Activated B cell treated with CpG ODN at 0.5 μM for 24 hours (primary cell): ENCODE measurements at regions of chr16 and their contacts with region 1.

Region 1: DNA sequence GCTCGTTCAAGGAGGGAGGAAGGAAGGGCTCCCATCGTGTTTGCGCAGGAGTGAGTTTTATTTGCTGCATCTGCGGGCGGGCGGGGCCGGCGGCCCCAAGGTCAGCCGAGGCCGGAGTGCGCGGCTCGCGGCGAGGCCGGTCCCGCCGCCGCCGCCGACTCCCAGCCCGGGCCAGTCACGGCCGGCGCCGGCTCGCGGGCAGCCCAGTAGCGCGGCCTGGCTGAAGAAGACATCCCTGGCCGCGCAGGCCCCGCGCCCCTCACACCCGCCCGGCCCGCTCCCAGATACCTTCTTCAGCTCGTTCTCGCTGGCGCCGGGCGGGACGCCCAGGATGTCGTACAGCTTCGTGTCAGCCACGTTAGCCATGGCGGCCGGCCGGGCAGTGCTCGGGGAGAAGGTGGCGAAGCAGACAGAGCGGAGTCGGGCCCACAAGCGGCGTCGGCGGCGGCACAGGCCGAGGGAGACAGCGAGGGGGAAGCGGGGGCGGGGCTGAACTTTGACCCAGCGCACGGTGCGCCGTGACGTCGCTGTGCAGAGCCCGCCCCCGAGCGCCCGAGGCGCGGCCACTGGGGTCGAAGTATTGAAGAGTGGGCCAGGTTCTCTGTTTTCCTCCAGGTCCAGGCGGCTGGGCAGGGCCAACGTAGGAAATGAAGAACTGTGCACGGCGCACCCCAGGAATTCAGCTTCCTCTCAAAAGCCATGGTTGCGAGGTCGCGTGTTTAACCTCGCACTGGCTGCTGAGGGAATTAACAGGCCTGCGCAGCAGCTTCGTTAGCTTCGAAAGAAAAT is at the start of gene DNAJA2:
- DNase-seq: peak; percentile 94
- ATAC-seq: peak; percentile 93
- H3K4me3 Mint-ChIP-seq: peak within 1 kb of the TSS; percentile 95
- H3K27ac Mint-ChIP-seq: peak within 1 kb of the TSS; percentile 98
- H3K4me1 Mint-ChIP-seq: peaks cover 44% of the 10 kb centered on the region
- H3K27me3 Mint-ChIP-seq: no peaks in the 10 kb centered on the region
- CTCF ChIP-seq: no peak
- total RNA-seq, gene DNAJA2: 54.4 and 57.1 TPM in 2 replicates

Region 2: GRCh38 chr16:46883690-46884512 is 89.5 kb before region 1 on chr16 and contains the start of gene GPT2:
- CTCF ChIA-PET with region 1: no interaction called
- POLR2A ChIA-PET with region 1: interaction called, 10 read pairs
- intact Hi-C with region 1: loop called (anchors 1 kb)
- DNase-seq: peak; percentile 85
- ATAC-seq: peak; percentile 95
- H3K4me3 Mint-ChIP-seq: peak within 1 kb of the TSS; percentile 89
- H3K27ac Mint-ChIP-seq: peak within 1 kb of the TSS; percentile 85
- H3K4me1 Mint-ChIP-seq: peaks cover 11% of the 10 kb centered on the region
- H3K27me3 Mint-ChIP-seq: peaks cover 2% of the 10 kb centered on the region
- CTCF ChIP-seq: no peak
- total RNA-seq, gene GPT2: 11.7 and 17.4 TPM in 2 replicates

Region 3: GRCh38 chr16:47247690-47248089 is 274.3 kb after region 1 on chr16:
- CTCF ChIA-PET with region 1: no interaction called
- POLR2A ChIA-PET with region 1: no interaction called
- intact Hi-C with region 1: no loop called
- DNase-seq: no peak
- ATAC-seq: no peak
- H3K4me3 Mint-ChIP-seq: no peak overlapping the region
- H3K27ac Mint-ChIP-seq: no peak overlapping the region
- H3K4me1 Mint-ChIP-seq: no peaks in the 10 kb centered on the region
- H3K27me3 Mint-ChIP-seq: no peaks in the 10 kb centered on the region
- CTCF ChIP-seq: no peak